B cell (primary cell): ENCODE measurements at regions of chr1 and their contacts with region 1.

Region 1: DNA sequence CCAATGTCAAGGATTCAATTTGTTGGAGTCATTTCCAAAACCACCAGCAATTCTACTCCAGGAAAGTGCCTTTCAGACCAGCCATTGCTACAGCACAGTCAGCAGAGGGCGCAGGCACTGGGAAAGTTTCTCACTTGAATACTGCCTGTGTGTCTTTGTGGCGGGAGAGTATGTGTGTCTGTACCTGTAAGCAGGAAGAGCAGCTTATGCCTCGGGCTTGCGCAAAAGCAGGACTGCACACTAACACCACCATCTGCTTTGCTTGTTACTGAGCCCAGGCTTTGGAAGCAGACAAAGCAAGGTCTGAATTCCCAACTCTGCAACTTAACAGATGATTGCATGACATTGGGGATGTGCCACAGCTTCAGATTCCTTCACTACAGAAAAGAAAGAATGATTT is 7.0 kb upstream of the CTSE start:
- DNase-seq: peak; percentile 85
- ATAC-seq: peak; percentile 84
- H3K4me3 ChIP-seq: peak overlapping the region in 2 of 5 experiments; percentile 3 to 38
- H3K4me3 Mint-ChIP-seq: peak overlapping the region; percentile 73
- H3K27ac ChIP-seq: no peak overlapping the region
- H3K27ac Mint-ChIP-seq: peak overlapping the region; percentile 46
- H3K4me1 ChIP-seq: peaks cover 38 to 42% of the 10 kb centered on the region in 2 donors
- H3K4me1 Mint-ChIP-seq: peaks cover 46% of the 10 kb centered on the region
- H3K27me3 ChIP-seq: no peaks in the 10 kb centered on the region
- H3K27me3 Mint-ChIP-seq: no peaks in the 10 kb centered on the region
- CTCF ChIP-seq: peak; percentile 92

Region 2: GRCh38 chr1:204885288-204885711 is 1145.4 kb before region 1 on chr1:
- CTCF ChIA-PET with region 1: no interaction called
- POLR2A ChIA-PET with region 1: no interaction called
- intact Hi-C with region 1: no loop called
- DNase-seq: no peak
- ATAC-seq: no peak
- H3K4me3 ChIP-seq: no peak overlapping the region
- H3K4me3 Mint-ChIP-seq: no peak overlapping the region
- H3K27ac ChIP-seq: no peak overlapping the region
- H3K27ac Mint-ChIP-seq: no peak overlapping the region
- H3K4me1 ChIP-seq: peaks cover 11% of the 10 kb centered on the region in 2 donors
- H3K4me1 Mint-ChIP-seq: peaks cover 9% of the 10 kb centered on the region
- H3K27me3 ChIP-seq: no peaks in the 10 kb centered on the region
- H3K27me3 Mint-ChIP-seq: peaks cover 13% of the 10 kb centered on the region
- CTCF ChIP-seq: no peak

Region 3: GRCh38 chr1:205919026-205919746 is 111.5 kb before region 1 on chr1:
- CTCF ChIA-PET with region 1: interaction called, 21 read pairs
- POLR2A ChIA-PET with region 1: no interaction called
- intact Hi-C with region 1: no loop called
- DNase-seq: peak; percentile 80
- ATAC-seq: peak; percentile 71
- H3K4me3 ChIP-seq: no peak overlapping the region
- H3K4me3 Mint-ChIP-seq: no peak overlapping the region
- H3K27ac ChIP-seq: no peak overlapping the region
- H3K27ac Mint-ChIP-seq: no peak overlapping the region
- H3K4me1 ChIP-seq: no peaks in the 10 kb centered on the region
- H3K4me1 Mint-ChIP-seq: peaks cover 2% of the 10 kb centered on the region
- H3K27me3 ChIP-seq: no peaks in the 10 kb centered on the region
- H3K27me3 Mint-ChIP-seq: peaks cover 4% of the 10 kb centered on the region
- CTCF ChIP-seq: peak; percentile 93

Region 4: DNA sequence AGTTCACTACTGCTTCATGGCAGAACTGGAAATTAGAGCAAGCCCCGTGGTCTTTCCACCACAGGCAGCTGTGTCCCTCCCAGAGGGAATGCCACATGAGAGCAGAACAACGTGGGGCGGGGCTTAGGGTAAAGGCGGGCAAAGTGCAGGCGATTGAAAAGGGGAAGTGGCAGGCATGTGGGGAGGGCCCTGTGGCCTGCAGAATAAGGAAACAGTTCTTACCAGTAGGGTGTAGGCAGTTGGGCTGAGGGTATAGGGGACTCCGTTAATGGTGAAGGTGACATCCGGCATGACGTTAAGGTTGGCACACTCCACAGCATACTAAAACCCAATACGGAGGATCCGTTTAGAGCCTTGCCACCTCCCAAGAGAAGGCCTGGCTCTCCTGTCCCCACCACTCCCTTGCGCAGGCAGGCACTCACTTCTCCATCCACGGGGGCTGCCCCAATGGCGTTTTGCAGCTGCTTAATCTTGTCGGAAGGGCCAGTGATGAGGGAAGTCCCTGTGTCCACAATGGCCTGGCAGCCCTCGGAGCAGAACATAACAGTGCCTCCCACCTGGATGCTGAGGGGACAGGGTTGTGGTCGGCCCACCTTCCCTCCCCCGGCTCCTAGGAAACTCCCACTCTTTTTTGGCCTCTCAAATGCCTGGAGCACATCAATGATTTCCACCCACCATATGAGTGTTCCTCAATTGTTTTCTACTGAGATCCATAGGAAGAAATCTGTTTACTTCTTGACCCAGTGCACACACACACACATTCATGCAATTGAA is 18.4 kb before region 1 on chr1:
- CTCF ChIA-PET with region 1: interaction called, 5 read pairs
- POLR2A ChIA-PET with region 1: no interaction called
- intact Hi-C with region 1: loop called (anchors 2 kb)
- DNase-seq: peak; percentile 93
- ATAC-seq: peak; percentile 99
- H3K4me3 ChIP-seq: peak overlapping the region in 4 of 5 experiments; percentile 23 to 55 (median 44)
- H3K4me3 Mint-ChIP-seq: peak overlapping the region; percentile 81
- H3K27ac ChIP-seq: peak overlapping the region; percentile 77 to 87
- H3K27ac Mint-ChIP-seq: peak overlapping the region; percentile 95
- H3K4me1 ChIP-seq: peaks cover 21 to 24% of the 10 kb centered on the region in 2 donors
- H3K4me1 Mint-ChIP-seq: peaks cover 32% of the 10 kb centered on the region
- H3K27me3 ChIP-seq: no peaks in the 10 kb centered on the region
- H3K27me3 Mint-ChIP-seq: no peaks in the 10 kb centered on the region
- CTCF ChIP-seq: peak; percentile 25

Region 5: DNA sequence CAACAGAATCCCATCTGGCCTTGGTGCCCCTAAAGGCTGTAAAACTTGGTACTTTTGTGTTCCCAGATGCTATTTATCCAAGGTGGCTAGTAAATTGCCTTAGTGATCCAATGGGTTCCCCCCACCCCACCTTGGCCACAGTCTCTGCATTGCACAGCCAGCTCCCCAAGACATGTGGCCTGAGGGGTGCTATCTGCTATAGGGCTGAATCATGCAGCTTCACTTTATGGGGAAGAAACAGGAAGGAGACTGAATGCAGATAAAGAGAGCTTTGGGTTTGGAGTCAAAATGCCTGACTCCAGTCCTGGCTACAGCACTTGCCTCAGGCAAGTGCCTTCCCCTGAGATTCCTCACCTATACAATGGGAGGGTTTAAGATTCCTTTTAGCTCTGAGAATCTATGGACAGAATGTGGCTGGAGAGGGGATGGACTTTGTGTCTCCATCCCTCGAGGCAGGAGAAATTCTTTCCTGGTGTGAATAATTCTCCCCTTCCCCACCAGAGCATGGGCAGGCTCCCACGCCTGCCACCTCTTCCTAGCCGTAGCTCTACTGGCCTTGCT is 28.7 kb after region 1 on chr1:
- CTCF ChIA-PET with region 1: interaction called, 35 read pairs
- POLR2A ChIA-PET with region 1: interaction called, 3 read pairs
- intact Hi-C with region 1: no loop called
- DNase-seq: no peak
- ATAC-seq: no peak
- H3K4me3 ChIP-seq: no peak overlapping the region
- H3K4me3 Mint-ChIP-seq: peak overlapping the region; percentile 24
- H3K27ac ChIP-seq: peak overlapping the region in 1 of 2 donors; percentile 70
- H3K27ac Mint-ChIP-seq: peak overlapping the region; percentile 92
- H3K4me1 ChIP-seq: peaks cover 22 to 43% of the 10 kb centered on the region in 2 donors
- H3K4me1 Mint-ChIP-seq: peaks cover 63% of the 10 kb centered on the region
- H3K27me3 ChIP-seq: no peaks in the 10 kb centered on the region
- H3K27me3 Mint-ChIP-seq: no peaks in the 10 kb centered on the region
- CTCF ChIP-seq: no peak

Region 6: DNA sequence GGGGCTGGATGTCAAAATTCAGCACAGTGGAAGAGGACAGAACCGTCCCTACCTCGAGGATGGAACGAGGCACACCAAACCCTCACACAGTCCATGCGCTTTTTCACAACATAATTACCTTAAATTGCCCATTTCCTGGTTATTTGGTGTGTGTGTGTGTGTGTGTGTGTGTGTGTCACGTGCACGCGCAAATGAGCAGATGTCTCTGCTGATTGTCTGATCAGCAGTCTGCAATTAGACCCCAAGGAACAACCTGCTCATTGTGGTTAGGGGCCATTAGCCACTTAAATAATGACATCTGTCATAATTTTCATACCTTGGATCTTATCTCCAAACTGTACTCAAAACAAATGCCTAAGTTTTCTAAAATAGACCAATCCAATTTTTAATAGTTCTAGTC is 63.3 kb after region 1 on chr1:
- CTCF ChIA-PET with region 1: interaction called, 682 read pairs
- POLR2A ChIA-PET with region 1: no interaction called
- intact Hi-C with region 1: no loop called
- DNase-seq: no peak
- ATAC-seq: no peak
- H3K4me3 ChIP-seq: no peak overlapping the region
- H3K4me3 Mint-ChIP-seq: no peak overlapping the region
- H3K27ac ChIP-seq: no peak overlapping the region
- H3K27ac Mint-ChIP-seq: no peak overlapping the region
- H3K4me1 ChIP-seq: peaks cover 0 to 5% of the 10 kb centered on the region in 2 donors
- H3K4me1 Mint-ChIP-seq: peaks cover 4% of the 10 kb centered on the region
- H3K27me3 ChIP-seq: no peaks in the 10 kb centered on the region
- H3K27me3 Mint-ChIP-seq: no peaks in the 10 kb centered on the region
- CTCF ChIP-seq: no peak

Region 7: GRCh38 chr1:206469933-206470691 is 439.4 kb after region 1 on chr1 and contains the start of gene IKBKE:
- CTCF ChIA-PET with region 1: no interaction called
- POLR2A ChIA-PET with region 1: no interaction called
- intact Hi-C with region 1: loop called (anchors 5 kb)
- DNase-seq: peak; percentile 77
- ATAC-seq: peak; percentile 65
- H3K4me3 ChIP-seq: peak within 1 kb of the TSS; percentile 62 to 97 (median 85)
- H3K4me3 Mint-ChIP-seq: peak within 1 kb of the TSS; percentile 88
- H3K27ac ChIP-seq: peak within 1 kb of the TSS; percentile 63 to 75
- H3K27ac Mint-ChIP-seq: peak within 1 kb of the TSS; percentile 85
- H3K4me1 ChIP-seq: peaks cover 63 to 74% of the 10 kb centered on the region in 2 donors
- H3K4me1 Mint-ChIP-seq: peaks cover 73% of the 10 kb centered on the region
- H3K27me3 ChIP-seq: no peaks in the 10 kb centered on the region
- H3K27me3 Mint-ChIP-seq: no peaks in the 10 kb centered on the region
- CTCF ChIP-seq: peak; percentile 30
- total RNA-seq, gene IKBKE: 40.5 and 40.8 TPM in 2 replicates